Heart left ventricle (tissue), 16 donors: ENCODE measurements at regions of chr9 and their contacts with region 1.

Region 1: DNA sequence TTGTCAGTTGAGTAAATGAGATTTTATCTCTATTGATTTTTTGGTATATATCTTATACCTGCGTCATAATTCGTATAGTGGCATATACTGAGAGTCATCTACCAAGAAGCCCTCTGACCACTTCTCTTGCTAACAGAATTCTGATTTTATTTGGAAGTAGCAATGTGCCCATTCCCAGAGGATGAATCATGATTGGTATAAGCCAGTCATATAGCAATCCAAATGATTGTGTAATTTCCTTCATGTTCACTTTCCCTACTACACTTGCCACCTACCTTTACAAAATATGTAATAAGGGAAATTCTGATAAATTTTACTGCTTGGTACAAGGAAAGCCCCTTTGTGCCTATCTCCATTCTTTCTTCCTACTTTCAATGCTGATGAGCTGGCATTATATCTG is 16.1 kb upstream of the ZNF462 start:
- DNase-seq: no peak
- ATAC-seq: no peak
- H3K4me3 ChIP-seq: no peak overlapping the region
- H3K27ac ChIP-seq: no peak overlapping the region
- H3K4me1 ChIP-seq: no peaks in the 10 kb centered on the region
- H3K27me3 ChIP-seq: no peaks in the 10 kb centered on the region
- CTCF ChIP-seq: no peak
- POLR2A ChIP-seq: no peak

Region 2: GRCh38 chr9:106784076-106784475 is 62.8 kb before region 1 on chr9:
- intact Hi-C with region 1: loop called in 1 of 10 experiments (anchors 10 kb)
- DNase-seq: no peak
- ATAC-seq: no peak
- H3K4me3 ChIP-seq: no peak overlapping the region
- H3K27ac ChIP-seq: no peak overlapping the region
- H3K4me1 ChIP-seq: no peaks in the 10 kb centered on the region
- H3K27me3 ChIP-seq: no peaks in the 10 kb centered on the region
- CTCF ChIP-seq: no peak
- POLR2A ChIP-seq: no peak

Region 3: GRCh38 chr9:106862825-106863720 is 16.2 kb after region 1 on chr9 and contains the start of gene ZNF462:
- intact Hi-C with region 1: no loop called
- DNase-seq: peak; percentile 51 to 68 (median 61)
- ATAC-seq: peak; percentile 43 to 68 (median 56)
- H3K4me3 ChIP-seq: peak within 1 kb of the TSS; percentile 58 to 96 (median 78)
- H3K27ac ChIP-seq: peak within 1 kb of the TSS; percentile 81 to 95 (median 88)
- H3K4me1 ChIP-seq: peaks cover 1 to 33% (median 18%) of the 10 kb centered on the region in 12 donors
- H3K27me3 ChIP-seq: peaks cover 0 to 37% (median 0%) of the 10 kb centered on the region in 9 donors
- CTCF ChIP-seq: peak in 8 of 12 donors; percentile 5 to 62 (median 36)
- POLR2A ChIP-seq: no peak
- total RNA-seq, gene ZNF462: 16.8 to 51.3 (median 31.5) TPM